Caco-2 (cell line): ENCODE measurements at regions of chrX and their contacts with region 1.

Region 1: DNA sequence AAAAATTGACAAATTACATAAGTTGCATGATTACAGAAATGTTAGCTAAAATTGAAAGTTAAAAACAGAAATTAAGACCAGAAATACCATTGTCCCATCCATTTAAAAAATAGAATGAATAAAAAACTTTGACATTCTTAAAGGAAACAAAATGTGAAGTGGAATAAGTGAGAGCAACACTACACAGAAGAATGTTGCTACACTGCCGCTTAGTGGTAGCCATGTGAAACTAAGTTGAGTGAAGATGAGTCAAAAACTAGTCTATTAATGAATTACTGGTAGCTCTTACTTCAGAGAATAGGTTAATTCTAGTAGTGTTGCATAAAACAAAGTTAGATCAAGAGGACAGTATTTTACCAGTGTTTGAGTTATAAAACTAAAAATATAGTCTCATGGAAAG is 571.0 kb upstream of the KLHL4 start:
- DNase-seq: peak; percentile 37 to 41
- H3K4me3 ChIP-seq: no peak overlapping the region
- H3K4me3 Mint-ChIP-seq: no peak overlapping the region
- H3K27ac Mint-ChIP-seq: no peak overlapping the region
- H3K4me1 ChIP-seq: peaks cover 10% of the 10 kb centered on the region
- H3K4me1 Mint-ChIP-seq: no peaks in the 10 kb centered on the region
- H3K27me3 ChIP-seq: no peaks in the 10 kb centered on the region
- H3K27me3 Mint-ChIP-seq: no peaks in the 10 kb centered on the region
- CTCF ChIP-seq: peak; percentile 37 to 56

Region 2: GRCh38 chrX:85611926-85612325 is 1334.6 kb before region 1 on chrX:
- CTCF ChIA-PET with region 1: no interaction called
- POLR2A ChIA-PET with region 1: no interaction called
- intact Hi-C with region 1: loop called (anchors 10 kb)
- DNase-seq: no peak
- H3K4me3 ChIP-seq: no peak overlapping the region
- H3K4me3 Mint-ChIP-seq: no peak overlapping the region
- H3K27ac Mint-ChIP-seq: no peak overlapping the region
- H3K4me1 ChIP-seq: no peaks in the 10 kb centered on the region
- H3K4me1 Mint-ChIP-seq: no peaks in the 10 kb centered on the region
- H3K27me3 ChIP-seq: no peaks in the 10 kb centered on the region
- H3K27me3 Mint-ChIP-seq: peaks cover 2% of the 10 kb centered on the region
- CTCF ChIP-seq: no peak

Region 3: GRCh38 chrX:86806788-86807187 is 139.8 kb before region 1 on chrX:
- CTCF ChIA-PET with region 1: interaction called, 17 read pairs
- POLR2A ChIA-PET with region 1: no interaction called
- intact Hi-C with region 1: loop called (anchors 1 kb)
- DNase-seq: peak; percentile 27 to 30
- H3K4me3 ChIP-seq: no peak overlapping the region
- H3K4me3 Mint-ChIP-seq: no peak overlapping the region
- H3K27ac Mint-ChIP-seq: no peak overlapping the region
- H3K4me1 ChIP-seq: no peaks in the 10 kb centered on the region
- H3K4me1 Mint-ChIP-seq: no peaks in the 10 kb centered on the region
- H3K27me3 ChIP-seq: no peaks in the 10 kb centered on the region
- H3K27me3 Mint-ChIP-seq: no peaks in the 10 kb centered on the region
- CTCF ChIP-seq: peak; percentile 30 to 64

Region 4: GRCh38 chrX:86930414-86930813 is 16.2 kb before region 1 on chrX:
- CTCF ChIA-PET with region 1: no interaction called
- POLR2A ChIA-PET with region 1: no interaction called
- intact Hi-C with region 1: loop called (anchors 1 kb)
- DNase-seq: peak; percentile 22 to 60
- H3K4me3 ChIP-seq: no peak overlapping the region
- H3K4me3 Mint-ChIP-seq: peak overlapping the region; percentile 58
- H3K27ac Mint-ChIP-seq: peak overlapping the region; percentile 95
- H3K4me1 ChIP-seq: peaks cover 21% of the 10 kb centered on the region
- H3K4me1 Mint-ChIP-seq: peaks cover 7% of the 10 kb centered on the region
- H3K27me3 ChIP-seq: no peaks in the 10 kb centered on the region
- H3K27me3 Mint-ChIP-seq: no peaks in the 10 kb centered on the region
- CTCF ChIP-seq: no peak

Region 5: GRCh38 chrX:87063642-87064041 is 117.1 kb after region 1 on chrX:
- CTCF ChIA-PET with region 1: no interaction called
- POLR2A ChIA-PET with region 1: no interaction called
- intact Hi-C with region 1: no loop called
- DNase-seq: no peak
- H3K4me3 ChIP-seq: no peak overlapping the region
- H3K4me3 Mint-ChIP-seq: no peak overlapping the region
- H3K27ac Mint-ChIP-seq: no peak overlapping the region
- H3K4me1 ChIP-seq: no peaks in the 10 kb centered on the region
- H3K4me1 Mint-ChIP-seq: no peaks in the 10 kb centered on the region
- H3K27me3 ChIP-seq: no peaks in the 10 kb centered on the region
- H3K27me3 Mint-ChIP-seq: no peaks in the 10 kb centered on the region
- CTCF ChIP-seq: no peak